Activated B cell treated with CpG ODN at 0.5 μM for 24 hours (primary cell): ENCODE measurements at regions of chr9 and their contacts with region 1.

Region 1: DNA sequence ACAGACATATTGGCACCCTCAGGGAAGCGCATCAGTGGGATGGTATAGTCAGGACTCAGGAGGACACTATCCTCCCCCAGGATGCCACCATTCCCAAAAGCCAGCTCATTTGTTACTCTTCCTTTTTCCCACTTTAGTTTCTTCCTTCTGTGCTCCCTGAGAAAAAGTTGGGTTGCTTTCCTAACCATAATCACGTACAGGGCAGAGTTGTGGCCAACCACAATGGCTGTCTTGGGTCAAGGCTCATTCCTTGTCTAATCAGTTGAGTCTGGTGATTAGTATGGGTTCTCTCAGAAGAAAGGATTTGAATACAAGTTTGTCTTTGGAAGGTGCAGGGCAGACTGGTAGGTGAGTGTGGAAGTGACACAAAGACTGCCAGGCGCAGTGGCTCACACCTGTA is 26.6 kb upstream of the ATP6V1G1 start:
- DNase-seq: no peak
- ATAC-seq: no peak
- H3K4me3 Mint-ChIP-seq: no peak overlapping the region
- H3K27ac Mint-ChIP-seq: no peak overlapping the region
- H3K4me1 Mint-ChIP-seq: peaks cover 51% of the 10 kb centered on the region
- H3K27me3 Mint-ChIP-seq: no peaks in the 10 kb centered on the region
- CTCF ChIP-seq: no peak

Region 2: DNA sequence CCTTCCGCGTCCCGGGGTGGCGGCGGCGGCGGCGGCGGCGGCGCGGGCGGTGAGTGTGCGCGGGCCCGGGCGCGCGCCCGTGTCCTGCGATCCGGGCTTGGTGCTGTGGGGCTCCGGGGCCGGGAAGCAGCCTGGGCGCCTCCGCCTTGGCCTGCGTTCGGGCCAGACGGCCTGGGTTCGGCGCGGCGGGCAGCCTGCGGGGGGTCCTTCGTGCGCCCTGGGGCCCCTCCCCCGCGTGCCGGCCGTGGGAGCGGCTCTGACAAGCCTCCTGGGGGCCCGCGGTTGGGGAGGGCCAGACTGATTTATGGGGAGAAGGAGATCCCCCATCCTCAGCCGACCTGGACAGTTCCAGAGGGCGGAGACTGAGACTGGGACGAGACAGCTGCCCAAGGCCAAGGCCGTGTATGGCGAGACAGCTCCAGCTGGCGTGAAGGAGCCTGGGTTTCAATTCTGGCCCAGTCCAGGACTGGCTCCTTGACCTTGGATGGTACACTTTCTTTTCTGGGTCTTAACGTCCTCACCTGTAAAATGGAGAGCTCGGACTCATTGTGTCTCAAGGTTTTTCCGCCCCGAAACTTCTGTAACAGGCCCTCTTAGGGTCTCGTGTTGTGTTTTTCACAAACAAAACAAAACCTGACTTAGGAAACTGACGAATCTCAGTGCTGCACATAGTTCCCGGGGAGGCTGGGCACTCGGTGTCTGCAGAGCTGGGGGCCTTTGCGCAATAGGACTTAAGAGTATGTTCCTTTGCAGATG is 50.7 kb after region 1 on chr9:
- CTCF ChIA-PET with region 1: no interaction called
- POLR2A ChIA-PET with region 1: interaction called, 5 read pairs
- intact Hi-C with region 1: loop called (anchors 2 kb)
- DNase-seq: no peak
- ATAC-seq: peak; percentile 51
- H3K4me3 Mint-ChIP-seq: peak overlapping the region; percentile 90
- H3K27ac Mint-ChIP-seq: peak overlapping the region; percentile 95
- H3K4me1 Mint-ChIP-seq: peaks cover 85% of the 10 kb centered on the region
- H3K27me3 Mint-ChIP-seq: no peaks in the 10 kb centered on the region
- CTCF ChIP-seq: no peak

Region 3: GRCh38 chr9:114805670-114806525 is 244.9 kb after region 1 on chr9 and contains the start of gene TNFSF15:
- CTCF ChIA-PET with region 1: no interaction called
- POLR2A ChIA-PET with region 1: no interaction called
- intact Hi-C with region 1: no loop called
- DNase-seq: no peak
- ATAC-seq: peak; percentile 85
- H3K4me3 Mint-ChIP-seq: peak within 1 kb of the TSS; percentile 66
- H3K27ac Mint-ChIP-seq: peak within 1 kb of the TSS; percentile 19
- H3K4me1 Mint-ChIP-seq: peaks cover 40% of the 10 kb centered on the region
- H3K27me3 Mint-ChIP-seq: peaks cover 2% of the 10 kb centered on the region
- CTCF ChIP-seq: no peak
- total RNA-seq, gene TNFSF15: 0.10 and 0.22 TPM in 2 replicates